Mammary epithelial cell (primary cell): ENCODE measurements at regions of chr2 and their contacts with region 1.

Region 1: GRCh38 chr2:129862668-129863067 is 116.8 kb upstream of the RAB6C start:
- DNase-seq: no peak
- H3K4me3 ChIP-seq: no peak overlapping the region
- H3K27ac ChIP-seq: no peak overlapping the region
- H3K4me1 ChIP-seq: no peaks in the 10 kb centered on the region
- H3K27me3 ChIP-seq: no peaks in the 10 kb centered on the region
- CTCF ChIP-seq: no peak

Region 2: GRCh38 chr2:129673847-129674711 is 188.6 kb before region 1 on chr2:
- CTCF ChIA-PET with region 1: no interaction called
- dilution Hi-C with region 1: no loop called
- in situ Hi-C with region 1: no loop called
- intact Hi-C with region 1: no loop called
- DNase-seq: no peak
- H3K4me3 ChIP-seq: no peak overlapping the region
- H3K27ac ChIP-seq: no peak overlapping the region
- H3K4me1 ChIP-seq: no peaks in the 10 kb centered on the region
- H3K27me3 ChIP-seq: no peaks in the 10 kb centered on the region
- CTCF ChIP-seq: no peak

Region 3: DNA sequence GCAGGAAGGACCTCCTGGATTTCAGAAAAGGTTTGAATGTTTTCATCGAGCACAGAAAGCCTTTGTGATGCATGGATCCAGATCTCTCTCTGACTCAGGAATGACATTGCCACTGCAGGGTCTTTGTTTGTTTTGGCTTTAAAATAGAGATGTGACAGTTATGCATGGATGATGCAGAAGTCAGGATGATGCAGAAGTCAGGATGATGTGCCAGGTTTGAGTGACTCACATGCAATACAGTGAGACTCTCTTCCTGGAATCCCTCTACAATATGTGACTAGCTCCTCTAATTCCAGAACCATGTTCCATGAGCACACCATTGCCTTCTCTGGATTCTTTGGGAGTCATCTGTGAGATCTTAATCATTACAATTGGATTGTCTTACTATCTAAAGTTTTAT is 61.1 kb before region 1 on chr2:
- CTCF ChIA-PET with region 1: no interaction called
- dilution Hi-C with region 1: loop called (anchors 10 kb)
- in situ Hi-C with region 1: no loop called
- intact Hi-C with region 1: no loop called
- DNase-seq: peak; percentile 34
- H3K4me3 ChIP-seq: no peak overlapping the region
- H3K27ac ChIP-seq: no peak overlapping the region
- H3K4me1 ChIP-seq: no peaks in the 10 kb centered on the region
- H3K27me3 ChIP-seq: no peaks in the 10 kb centered on the region
- CTCF ChIP-seq: no peak

Region 4: GRCh38 chr2:129903586-129904425 is 41.1 kb after region 1 on chr2:
- CTCF ChIA-PET with region 1: no interaction called
- dilution Hi-C with region 1: no loop called
- in situ Hi-C with region 1: no loop called
- intact Hi-C with region 1: no loop called
- DNase-seq: no peak
- H3K4me3 ChIP-seq: no peak overlapping the region
- H3K27ac ChIP-seq: no peak overlapping the region
- H3K4me1 ChIP-seq: no peaks in the 10 kb centered on the region
- H3K27me3 ChIP-seq: no peaks in the 10 kb centered on the region
- CTCF ChIP-seq: no peak